T-cell (primary cell): ENCODE measurements at regions of chr6 and their contacts with region 1.

Region 1: GRCh38 chr6:32971581-32972352 is 3.4 kb downstream of the BRD2 start:
- DNase-seq: peak; percentile 99 to 100 (median 100)
- ATAC-seq: peak; percentile 60 to 62 (median 60)
- H3K4me3 ChIP-seq: peak overlapping the region; percentile 72 to 89
- H3K4me3 Mint-ChIP-seq: peak overlapping the region; percentile 96 to 99 (median 99)
- H3K27ac ChIP-seq: peak overlapping the region; percentile 92
- H3K27ac Mint-ChIP-seq: peak overlapping the region; percentile 99
- H3K4me1 ChIP-seq: peaks cover 22 to 45% of the 10 kb centered on the region in 2 experiments
- H3K4me1 Mint-ChIP-seq: peaks cover 30 to 69% (median 40%) of the 10 kb centered on the region in 3 donors
- H3K27me3 ChIP-seq: peaks cover 0 to 4% of the 10 kb centered on the region in 2 experiments
- H3K27me3 Mint-ChIP-seq: no peaks in the 10 kb centered on the region

Region 2: DNA sequence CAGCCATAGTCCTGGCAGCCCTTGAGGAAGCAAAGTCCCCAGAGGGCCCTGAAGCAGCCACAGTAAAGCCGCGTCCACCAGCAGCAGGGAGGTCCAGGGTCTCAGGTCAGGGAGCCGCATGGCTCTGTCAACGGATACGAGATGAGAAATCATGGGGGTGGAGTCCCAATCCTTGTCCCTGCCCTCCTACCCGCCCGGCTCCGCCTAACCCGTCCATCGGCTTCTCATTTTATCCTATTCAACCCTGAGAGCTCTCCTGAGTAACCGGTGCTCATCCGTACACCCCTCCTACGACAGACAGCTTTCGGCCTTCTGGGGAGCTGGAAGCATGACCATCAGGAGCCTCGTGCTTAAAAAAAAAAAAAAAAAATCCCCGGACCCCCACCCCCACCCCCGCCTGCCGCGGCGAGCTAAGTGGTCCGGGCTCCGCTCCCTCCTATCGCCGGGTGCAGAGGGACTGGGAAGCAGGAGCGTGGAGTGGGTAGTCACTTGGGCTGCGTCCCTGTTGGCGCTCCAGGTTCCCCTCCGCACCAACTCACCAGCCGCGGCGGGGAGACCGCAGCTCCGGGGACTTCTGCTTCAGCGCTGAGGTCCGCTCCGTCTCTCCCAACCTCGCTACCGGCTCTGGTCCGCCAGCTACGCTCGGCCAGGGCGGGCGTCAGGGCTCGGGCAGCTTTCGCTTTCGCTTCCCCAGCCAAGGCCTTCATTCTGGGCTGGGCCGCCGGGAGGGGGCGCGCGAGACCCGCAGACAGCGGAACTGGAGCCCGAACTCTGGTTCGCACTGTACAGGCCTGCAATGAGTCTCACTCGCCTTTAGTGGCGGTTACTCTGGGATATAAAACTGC is 133.4 kb before region 1 on chr6 and contains the start of gene TAP2:
- CTCF ChIA-PET with region 1: interaction called in 1 of 2 experiments, 24 read pairs
- POLR2A ChIA-PET with region 1: interaction called, 9 to 39 read pairs
- DNase-seq: peak; percentile 90 to 99 (median 97)
- ATAC-seq: peak; percentile 92 to 93 (median 92)
- H3K4me3 ChIP-seq: peak within 1 kb of the TSS; percentile 82 to 89
- H3K4me3 Mint-ChIP-seq: peak within 1 kb of the TSS; percentile 72 to 92 (median 84)
- H3K27ac ChIP-seq: peak within 1 kb of the TSS; percentile 100
- H3K27ac Mint-ChIP-seq: peak within 1 kb of the TSS; percentile 100
- H3K4me1 ChIP-seq: peaks cover 38 to 67% of the 10 kb centered on the region in 2 experiments
- H3K4me1 Mint-ChIP-seq: peaks cover 68 to 90% (median 88%) of the 10 kb centered on the region in 3 donors
- H3K27me3 ChIP-seq: no peaks in the 10 kb centered on the region
- H3K27me3 Mint-ChIP-seq: no peaks in the 10 kb centered on the region
- total RNA-seq, gene TAP2: 116 to 147 (median 140) TPM

Region 3: DNA sequence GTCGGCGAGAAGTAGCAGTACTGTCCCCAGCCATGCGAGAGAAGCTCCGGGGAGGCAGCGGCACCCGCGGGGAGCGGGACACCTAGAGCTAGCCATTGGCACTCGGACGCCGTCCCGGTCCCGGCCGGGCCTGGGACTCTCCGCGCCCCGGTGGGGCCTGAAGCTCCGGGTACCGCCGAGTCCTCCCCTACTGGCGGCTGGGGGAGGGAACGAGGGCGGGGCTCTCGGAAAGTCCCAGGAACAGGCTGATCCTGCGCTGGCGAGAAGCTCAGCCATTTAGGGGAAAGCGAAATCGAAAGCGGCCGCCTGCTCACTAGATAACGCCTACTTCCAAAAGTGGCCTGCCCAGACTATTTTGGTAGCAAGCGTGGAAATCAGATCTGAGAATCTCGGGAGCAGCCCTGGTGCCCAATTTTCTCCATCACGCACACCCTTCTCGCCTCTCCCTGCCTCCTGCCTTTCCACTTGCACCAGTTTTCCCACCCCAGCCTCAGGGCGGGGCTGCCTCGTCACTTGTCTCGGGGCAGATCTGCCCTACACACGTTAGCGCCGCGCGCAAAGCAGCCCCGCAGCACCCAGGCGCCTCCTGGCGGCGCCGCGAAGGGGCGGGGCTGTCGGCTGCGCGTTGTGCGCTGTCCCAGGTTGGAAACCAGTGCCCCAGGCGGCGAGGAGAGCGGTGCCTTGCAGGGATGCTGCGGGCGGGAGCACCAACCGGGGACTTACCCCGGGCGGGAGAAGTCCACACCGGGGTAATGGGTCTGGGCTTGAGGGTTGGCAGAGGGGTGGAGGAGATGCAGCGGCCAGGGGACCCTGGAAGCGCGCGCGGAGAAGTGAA is 118.0 kb before region 1 on chr6 and contains the starts of genes PSMB9 and TAP1:
- CTCF ChIA-PET with region 1: interaction called, 4 to 24 read pairs
- POLR2A ChIA-PET with region 1: interaction called, 10 to 24 read pairs
- DNase-seq: peak; percentile 86 to 98 (median 95)
- ATAC-seq: peak; percentile 82 to 87 (median 85)
- H3K4me3 ChIP-seq: peak within 1 kb of the TSS; percentile 85 to 95
- H3K4me3 Mint-ChIP-seq: peak within 1 kb of the TSS; percentile 98 to 99 (median 98)
- H3K27ac ChIP-seq: peak within 1 kb of the TSS; percentile 99
- H3K27ac Mint-ChIP-seq: peak within 1 kb of the TSS; percentile 99 to 100
- H3K4me1 ChIP-seq: peaks cover 34 to 68% of the 10 kb centered on the region in 2 experiments
- H3K4me1 Mint-ChIP-seq: peaks cover 70 to 88% (median 73%) of the 10 kb centered on the region in 3 donors
- H3K27me3 ChIP-seq: no peaks in the 10 kb centered on the region
- H3K27me3 Mint-ChIP-seq: no peaks in the 10 kb centered on the region
- total RNA-seq, gene PSMB9: 110 to 173 (median 134) TPM
- total RNA-seq, gene TAP1: 117 to 163 (median 147) TPM

Region 4: GRCh38 chr6:32894080-32895005 is 77.4 kb before region 1 on chr6:
- CTCF ChIA-PET with region 1: interaction called in 1 of 2 experiments, 5 read pairs
- POLR2A ChIA-PET with region 1: interaction called, 4 to 17 read pairs
- DNase-seq: peak; percentile 81 to 98 (median 90)
- ATAC-seq: peak; percentile 97 to 99 (median 98)
- H3K4me3 ChIP-seq: peak overlapping the region; percentile 95 to 96
- H3K4me3 Mint-ChIP-seq: peak overlapping the region; percentile 98 to 99 (median 99)
- H3K27ac ChIP-seq: peak overlapping the region; percentile 75
- H3K27ac Mint-ChIP-seq: peak overlapping the region; percentile 95
- H3K4me1 ChIP-seq: peaks cover 15 to 24% of the 10 kb centered on the region in 2 experiments
- H3K4me1 Mint-ChIP-seq: peaks cover 36 to 49% (median 42%) of the 10 kb centered on the region in 3 donors
- H3K27me3 ChIP-seq: no peaks in the 10 kb centered on the region
- H3K27me3 Mint-ChIP-seq: no peaks in the 10 kb centered on the region

Region 5: GRCh38 chr6:32940656-32941213 is 31.0 kb before region 1 on chr6 and contains the start of gene HLA-DMB:
- CTCF ChIA-PET with region 1: interaction called in 1 of 2 experiments, 20 read pairs
- POLR2A ChIA-PET with region 1: interaction called, 14 to 36 read pairs
- DNase-seq: peak in 33 of 35 experiments; percentile 19 to 89 (median 42)
- ATAC-seq: peak; percentile 85 to 90 (median 87)
- H3K4me3 ChIP-seq: peak within 1 kb of the TSS; percentile 69 to 94
- H3K4me3 Mint-ChIP-seq: peak within 1 kb of the TSS; percentile 76 to 90 (median 88)
- H3K27ac ChIP-seq: peak within 1 kb of the TSS; percentile 93
- H3K27ac Mint-ChIP-seq: peak within 1 kb of the TSS; percentile 97 to 98
- H3K4me1 ChIP-seq: peaks cover 52 to 60% of the 10 kb centered on the region in 2 experiments
- H3K4me1 Mint-ChIP-seq: peaks cover 57 to 72% (median 59%) of the 10 kb centered on the region in 3 donors
- H3K27me3 ChIP-seq: no peaks in the 10 kb centered on the region
- H3K27me3 Mint-ChIP-seq: no peaks in the 10 kb centered on the region
- total RNA-seq, gene HLA-DMB: 8.8 to 30.6 (median 10.6) TPM

Region 6: DNA sequence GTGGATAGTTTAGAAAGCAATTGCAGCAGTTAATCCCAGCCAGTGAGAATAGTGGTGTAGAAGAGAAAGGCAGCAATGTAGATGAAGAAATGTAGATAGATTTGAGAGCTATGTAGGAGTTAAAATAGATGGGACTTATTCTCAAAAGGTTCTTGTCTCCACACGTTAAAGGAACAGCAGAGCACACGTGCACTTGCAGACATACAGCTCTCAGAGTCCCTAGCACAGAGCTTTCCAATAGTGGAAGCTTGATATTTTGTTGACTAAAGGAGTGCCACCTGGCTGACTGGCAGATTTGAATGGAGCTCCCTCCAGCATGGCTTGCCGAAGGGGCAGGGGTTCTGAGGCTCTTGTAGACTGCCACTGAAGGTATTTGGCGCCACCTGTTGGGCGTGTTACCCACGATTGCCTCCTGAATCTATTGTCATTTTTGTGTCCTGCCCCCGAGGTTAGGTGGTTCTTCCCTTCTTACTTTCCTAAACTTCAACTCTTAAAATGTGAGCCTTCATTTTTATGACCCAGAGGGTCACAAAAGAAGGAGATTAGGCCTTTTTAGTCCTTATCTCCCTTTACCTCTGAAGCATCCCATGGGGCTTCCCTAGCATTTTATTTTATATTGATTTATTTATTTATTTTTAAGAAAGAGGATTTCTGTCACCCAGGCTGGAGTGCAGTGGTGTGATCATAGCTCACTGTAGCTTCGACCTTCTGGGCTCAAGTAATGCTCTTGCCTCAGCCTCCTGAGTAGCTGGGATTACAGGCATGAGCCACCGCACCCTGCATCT is 13.0 kb after region 1 on chr6:
- CTCF ChIA-PET with region 1: interaction called, 3 to 71 read pairs
- POLR2A ChIA-PET with region 1: interaction called, 8 to 22 read pairs
- DNase-seq: peak; percentile 70 to 95 (median 88)
- ATAC-seq: peak; percentile 76 to 88 (median 86)
- H3K4me3 ChIP-seq: no peak overlapping the region
- H3K4me3 Mint-ChIP-seq: no peak overlapping the region
- H3K27ac ChIP-seq: no peak overlapping the region
- H3K27ac Mint-ChIP-seq: peak overlapping the region; percentile 50 to 83
- H3K4me1 ChIP-seq: peaks cover 0 to 9% of the 10 kb centered on the region in 2 experiments
- H3K4me1 Mint-ChIP-seq: peaks cover 23 to 35% (median 26%) of the 10 kb centered on the region in 3 donors
- H3K27me3 ChIP-seq: no peaks in the 10 kb centered on the region
- H3K27me3 Mint-ChIP-seq: no peaks in the 10 kb centered on the region

Region 7: GRCh38 chr6:33860706-33861474 is 889.1 kb after region 1 on chr6:
- CTCF ChIA-PET with region 1: no interaction called
- POLR2A ChIA-PET with region 1: no interaction called
- DNase-seq: peak in 31 of 35 experiments; percentile 5 to 56 (median 26)
- ATAC-seq: peak; percentile 44 to 59 (median 54)
- H3K4me3 ChIP-seq: no peak overlapping the region
- H3K4me3 Mint-ChIP-seq: peak overlapping the region in 1 of 3 donors; percentile 22
- H3K27ac ChIP-seq: no peak overlapping the region
- H3K27ac Mint-ChIP-seq: peak overlapping the region; percentile 25 to 41
- H3K4me1 ChIP-seq: peaks cover 24 to 82% of the 10 kb centered on the region in 2 experiments
- H3K4me1 Mint-ChIP-seq: peaks cover 59 to 72% (median 63%) of the 10 kb centered on the region in 3 donors
- H3K27me3 ChIP-seq: peaks cover 0 to 76% of the 10 kb centered on the region in 2 experiments
- H3K27me3 Mint-ChIP-seq: peaks cover 0 to 16% of the 10 kb centered on the region in 2 donors